ENCODE measurements at regions of chr18 and their contacts with region 1.

Region 1: DNA sequence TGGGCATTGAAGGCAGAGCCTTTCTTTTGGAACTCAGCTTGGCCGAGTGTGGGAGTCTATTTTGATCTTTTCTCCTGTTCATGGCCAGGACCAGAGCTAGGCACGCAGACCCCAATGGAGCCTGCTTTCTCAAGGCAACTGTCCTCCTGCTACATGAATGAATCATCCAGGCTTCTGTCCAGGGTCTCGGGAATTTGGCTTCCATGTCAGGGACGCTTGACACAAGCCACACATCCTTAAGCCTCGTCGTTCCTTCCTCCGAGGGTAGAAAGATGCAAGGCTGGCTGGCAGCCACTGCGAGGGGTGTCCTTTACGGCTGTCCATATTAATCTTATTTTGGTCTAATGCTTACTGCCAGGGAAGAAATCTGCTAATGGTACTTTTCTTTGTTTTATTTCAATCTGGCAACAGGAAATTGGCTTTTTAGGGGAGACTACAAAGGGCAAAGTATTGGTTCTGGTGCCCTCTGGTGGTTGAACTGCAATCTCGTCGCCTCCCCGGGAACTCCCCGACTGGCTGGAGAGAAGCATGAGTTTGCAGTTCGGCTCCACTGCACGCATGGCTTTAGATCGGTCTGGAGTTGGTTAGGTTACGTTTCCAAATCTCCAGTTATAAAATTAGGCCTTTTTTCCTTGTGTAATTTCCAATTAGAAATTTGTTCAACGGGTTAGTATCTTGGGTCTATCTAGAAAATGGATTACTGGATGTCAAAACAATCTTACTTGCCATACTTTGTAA is 135.2 kb downstream of the ALPK2 start:
- DNase-seq: peak; percentile 80
- H3K4me3 Mint-ChIP-seq: no peak overlapping the region
- H3K27ac Mint-ChIP-seq: no peak overlapping the region
- H3K4me1 Mint-ChIP-seq: no peaks in the 10 kb centered on the region
- H3K27me3 Mint-ChIP-seq: peaks cover 29% of the 10 kb centered on the region
- CTCF ChIP-seq: peak; percentile 78

Region 2: DNA sequence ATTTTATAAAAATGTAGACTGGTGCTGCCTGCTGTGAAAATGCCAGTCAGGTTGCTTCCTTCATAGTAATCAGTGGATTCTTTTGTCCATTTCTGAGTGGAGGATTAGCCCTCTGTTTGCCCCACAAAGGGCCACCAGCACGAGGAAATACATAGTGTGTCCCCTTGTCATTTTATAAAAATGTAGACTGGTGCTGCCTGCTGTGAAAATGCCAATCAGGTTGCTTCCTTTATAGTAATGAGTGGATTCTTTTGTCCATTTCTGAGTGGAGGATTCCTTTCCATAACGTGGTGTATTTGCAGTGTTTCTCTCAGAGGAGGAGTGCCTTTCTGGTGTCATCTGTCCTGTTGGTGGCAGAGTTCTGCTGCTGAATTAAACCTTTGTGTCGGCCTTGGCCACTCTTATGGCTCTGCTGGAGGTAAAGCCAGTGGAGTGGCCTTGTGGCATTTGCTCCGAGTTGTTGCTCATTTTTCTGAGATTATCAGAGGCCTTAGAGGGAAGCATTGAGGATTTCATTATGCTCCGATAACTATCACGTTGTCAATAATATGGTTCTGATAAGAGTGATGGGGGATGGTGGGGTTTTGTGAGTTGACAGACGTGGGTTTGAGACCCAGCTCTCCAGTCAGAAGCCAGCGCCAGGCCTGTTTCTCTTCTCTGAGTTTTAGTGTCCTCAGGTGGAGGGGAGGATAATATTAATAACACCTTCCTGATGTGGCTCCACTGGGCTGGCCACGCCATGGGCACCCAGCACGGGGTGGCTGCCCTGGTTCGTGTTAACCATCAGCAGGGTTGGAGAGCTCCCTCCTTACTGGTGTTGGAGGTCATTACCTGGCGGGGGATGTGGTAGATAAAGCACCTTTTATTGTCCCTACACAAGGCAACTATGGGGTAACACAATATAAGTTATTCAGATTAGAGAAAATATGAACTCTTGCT is 353.0 kb before region 1 on chr18:
- CTCF ChIA-PET with region 1: no interaction called
- POLR2A ChIA-PET with region 1: no interaction called
- intact Hi-C with region 1: no loop called
- DNase-seq: no peak
- H3K4me3 Mint-ChIP-seq: no peak overlapping the region
- H3K27ac Mint-ChIP-seq: peak overlapping the region; percentile 27
- H3K4me1 Mint-ChIP-seq: peaks cover 3% of the 10 kb centered on the region
- H3K27me3 Mint-ChIP-seq: no peaks in the 10 kb centered on the region
- CTCF ChIP-seq: peak; percentile 6

Region 3: DNA sequence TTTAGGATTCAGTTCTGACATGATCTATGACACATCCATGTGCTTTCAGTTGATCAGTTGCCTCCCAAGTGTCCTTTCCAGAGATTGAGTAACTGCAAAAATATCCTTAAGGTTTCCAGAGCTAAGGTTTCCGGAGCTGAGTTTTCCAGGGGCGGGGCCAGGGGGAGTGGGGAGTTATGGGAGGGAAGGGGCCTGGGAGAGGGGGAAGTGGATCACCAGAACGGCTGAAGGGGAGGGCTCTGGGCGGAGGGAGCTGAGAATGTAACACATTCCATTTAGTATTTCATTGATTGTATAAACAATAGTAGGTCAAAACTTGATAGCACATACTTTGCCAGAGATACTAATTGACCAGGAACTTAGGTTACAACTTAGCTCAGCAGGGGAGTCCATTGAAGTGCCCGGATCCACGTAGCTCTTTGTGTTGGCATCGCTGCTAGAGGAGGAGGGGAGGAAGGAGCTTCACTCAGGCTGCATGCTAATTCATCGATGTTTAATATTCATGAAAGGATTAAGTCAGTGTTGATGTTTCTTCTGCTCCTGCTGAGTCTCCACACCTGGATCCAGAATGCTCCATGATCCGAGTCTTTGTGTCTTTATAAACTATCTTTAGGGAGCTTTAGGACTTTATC is 154.6 kb before region 1 on chr18:
- CTCF ChIA-PET with region 1: no interaction called
- POLR2A ChIA-PET with region 1: no interaction called
- intact Hi-C with region 1: loop called (anchors 10 kb)
- DNase-seq: no peak
- H3K4me3 Mint-ChIP-seq: no peak overlapping the region
- H3K27ac Mint-ChIP-seq: peak overlapping the region; percentile 16
- H3K4me1 Mint-ChIP-seq: peaks cover 5% of the 10 kb centered on the region
- H3K27me3 Mint-ChIP-seq: no peaks in the 10 kb centered on the region
- CTCF ChIP-seq: no peak

Region 4: GRCh38 chr18:58402247-58402646 is 91.4 kb before region 1 on chr18:
- CTCF ChIA-PET with region 1: interaction called, 16 read pairs
- POLR2A ChIA-PET with region 1: interaction called, 3 read pairs
- intact Hi-C with region 1: loop called (anchors 1 kb)
- DNase-seq: peak; percentile 43
- H3K4me3 Mint-ChIP-seq: no peak overlapping the region
- H3K27ac Mint-ChIP-seq: no peak overlapping the region
- H3K4me1 Mint-ChIP-seq: no peaks in the 10 kb centered on the region
- H3K27me3 Mint-ChIP-seq: no peaks in the 10 kb centered on the region
- CTCF ChIP-seq: no peak

Region 5: GRCh38 chr18:58432058-58432727 is 61.5 kb before region 1 on chr18:
- CTCF ChIA-PET with region 1: no interaction called
- POLR2A ChIA-PET with region 1: no interaction called
- intact Hi-C with region 1: no loop called
- DNase-seq: no peak
- H3K4me3 Mint-ChIP-seq: no peak overlapping the region
- H3K27ac Mint-ChIP-seq: no peak overlapping the region
- H3K4me1 Mint-ChIP-seq: no peaks in the 10 kb centered on the region
- H3K27me3 Mint-ChIP-seq: no peaks in the 10 kb centered on the region
- CTCF ChIP-seq: no peak

Region 6: DNA sequence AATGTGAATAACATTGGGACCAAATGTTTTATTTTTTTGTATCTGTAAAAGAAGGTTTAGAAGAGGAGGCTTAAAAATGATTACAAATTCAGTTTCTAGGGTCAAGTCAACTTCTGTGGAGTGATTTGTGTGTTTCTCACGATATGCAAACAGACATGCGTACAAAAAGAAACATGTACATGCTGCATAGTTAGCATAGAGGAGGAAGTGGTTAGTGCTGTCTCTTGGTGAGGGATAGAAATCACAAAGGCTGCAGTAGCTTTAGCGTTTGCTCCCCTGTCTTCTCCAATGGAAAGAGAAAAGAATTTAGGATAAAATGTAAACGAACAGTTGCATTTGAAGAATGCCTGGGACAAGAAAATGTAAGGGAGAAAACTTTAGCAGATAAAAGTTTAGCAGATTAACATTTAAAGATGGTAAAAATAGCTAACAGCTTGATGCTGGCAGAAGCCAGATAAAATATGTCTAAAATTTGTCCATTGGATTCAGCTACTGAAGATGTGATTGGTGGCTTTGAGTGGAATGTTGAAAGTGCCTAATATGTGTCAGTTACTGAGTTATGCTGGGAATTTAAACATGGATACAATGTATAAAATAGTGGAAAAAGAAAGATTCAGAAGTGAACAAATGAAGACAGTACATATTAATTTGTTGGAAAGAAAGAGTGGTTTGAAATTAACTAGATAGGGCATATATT is 222.5 kb after region 1 on chr18:
- CTCF ChIA-PET with region 1: no interaction called
- POLR2A ChIA-PET with region 1: no interaction called
- intact Hi-C with region 1: no loop called
- DNase-seq: no peak
- H3K4me3 Mint-ChIP-seq: no peak overlapping the region
- H3K27ac Mint-ChIP-seq: no peak overlapping the region
- H3K4me1 Mint-ChIP-seq: no peaks in the 10 kb centered on the region
- H3K27me3 Mint-ChIP-seq: no peaks in the 10 kb centered on the region
- CTCF ChIP-seq: no peak

Region 7: DNA sequence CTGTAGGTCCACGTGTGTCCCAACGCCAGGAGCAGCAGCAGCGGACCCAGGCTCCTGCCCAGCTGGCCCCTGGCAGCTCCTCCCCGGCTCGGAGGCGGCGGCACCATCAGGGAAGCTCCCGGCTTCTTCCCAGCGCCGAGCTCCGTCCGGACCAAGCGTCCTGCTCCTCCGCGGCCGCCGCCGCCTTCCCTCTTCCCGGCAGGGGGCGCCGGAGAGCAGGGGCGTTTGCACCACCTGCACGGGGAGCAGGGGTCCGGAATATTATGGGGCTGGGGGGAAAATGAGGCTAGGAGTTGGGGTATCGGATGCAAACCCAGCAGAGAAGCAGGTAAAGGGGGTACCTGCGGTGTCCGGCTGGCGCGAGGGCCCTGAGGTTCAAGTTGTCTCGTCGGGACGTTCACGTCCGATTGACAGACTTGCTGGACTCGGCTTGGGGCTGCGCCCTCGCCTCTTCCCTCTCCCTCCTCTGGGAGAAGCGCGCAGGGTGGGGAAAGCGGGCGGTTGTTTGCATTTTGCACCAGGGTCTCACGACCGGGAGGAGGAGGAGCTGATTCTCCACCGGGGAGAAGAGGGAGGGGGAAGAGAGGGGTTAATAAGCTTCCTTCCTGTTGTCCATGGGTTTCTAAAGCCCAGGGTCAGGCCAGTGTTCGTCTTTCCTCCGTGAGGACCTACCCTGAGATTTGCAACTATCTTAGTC is 1203.7 kb after region 1 on chr18 and contains the start of gene CCBE1:
- CTCF ChIA-PET with region 1: no interaction called
- POLR2A ChIA-PET with region 1: no interaction called
- intact Hi-C with region 1: no loop called
- DNase-seq: peak; percentile 85
- H3K4me3 Mint-ChIP-seq: peak within 1 kb of the TSS; percentile 73
- H3K27ac Mint-ChIP-seq: peak within 1 kb of the TSS; percentile 69
- H3K4me1 Mint-ChIP-seq: peaks cover 36% of the 10 kb centered on the region
- H3K27me3 Mint-ChIP-seq: no peaks in the 10 kb centered on the region
- CTCF ChIP-seq: peak; percentile 99
- total RNA-seq, gene CCBE1: 23.8 and 28.9 TPM in 2 replicates